Psoas muscle (tissue), 8 donors: ENCODE measurements at regions of chrX and their contacts with region 1.

Region 1: GRCh38 chrX:80876877-80877276 is 67.2 kb upstream of the BRWD3 start:
- DNase-seq: no peak
- ATAC-seq: no peak
- H3K4me3 ChIP-seq: no peak overlapping the region
- H3K27ac ChIP-seq: no peak overlapping the region
- H3K4me1 ChIP-seq: no peaks in the 10 kb centered on the region
- H3K27me3 ChIP-seq: no peaks in the 10 kb centered on the region
- CTCF ChIP-seq: peak; percentile 54

Region 2: GRCh38 chrX:80430826-80431504 is 445.9 kb before region 1 on chrX:
- intact Hi-C with region 1: no loop called
- DNase-seq: no peak
- ATAC-seq: no peak
- H3K4me3 ChIP-seq: no peak overlapping the region
- H3K27ac ChIP-seq: no peak overlapping the region
- H3K4me1 ChIP-seq: no peaks in the 10 kb centered on the region
- H3K27me3 ChIP-seq: peaks cover 0 to 10% (median 0%) of the 10 kb centered on the region in 3 donors
- CTCF ChIP-seq: no peak

Region 3: DNA sequence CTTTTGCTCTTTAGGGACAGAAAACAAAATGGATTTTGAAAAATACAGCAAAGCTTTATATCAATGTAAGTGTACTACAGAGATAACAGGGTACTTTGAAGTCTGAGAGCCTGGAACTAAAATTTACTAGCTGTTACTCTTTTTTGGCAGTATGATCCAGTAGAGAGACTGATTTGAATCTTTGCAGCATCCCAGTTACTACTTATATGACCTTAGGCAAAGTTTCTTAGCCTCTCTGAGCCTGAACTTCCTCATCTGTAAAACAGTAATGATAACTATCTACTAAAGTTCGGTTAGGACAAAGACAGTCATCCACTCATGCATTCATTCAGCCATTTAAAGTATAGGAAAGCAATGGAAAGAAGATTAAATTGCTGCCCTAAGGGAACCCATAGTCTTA is 77.3 kb before region 1 on chrX:
- intact Hi-C with region 1: no loop called
- DNase-seq: no peak
- ATAC-seq: no peak
- H3K4me3 ChIP-seq: no peak overlapping the region
- H3K27ac ChIP-seq: no peak overlapping the region
- H3K4me1 ChIP-seq: no peaks in the 10 kb centered on the region
- H3K27me3 ChIP-seq: no peaks in the 10 kb centered on the region
- CTCF ChIP-seq: no peak

Region 4: DNA sequence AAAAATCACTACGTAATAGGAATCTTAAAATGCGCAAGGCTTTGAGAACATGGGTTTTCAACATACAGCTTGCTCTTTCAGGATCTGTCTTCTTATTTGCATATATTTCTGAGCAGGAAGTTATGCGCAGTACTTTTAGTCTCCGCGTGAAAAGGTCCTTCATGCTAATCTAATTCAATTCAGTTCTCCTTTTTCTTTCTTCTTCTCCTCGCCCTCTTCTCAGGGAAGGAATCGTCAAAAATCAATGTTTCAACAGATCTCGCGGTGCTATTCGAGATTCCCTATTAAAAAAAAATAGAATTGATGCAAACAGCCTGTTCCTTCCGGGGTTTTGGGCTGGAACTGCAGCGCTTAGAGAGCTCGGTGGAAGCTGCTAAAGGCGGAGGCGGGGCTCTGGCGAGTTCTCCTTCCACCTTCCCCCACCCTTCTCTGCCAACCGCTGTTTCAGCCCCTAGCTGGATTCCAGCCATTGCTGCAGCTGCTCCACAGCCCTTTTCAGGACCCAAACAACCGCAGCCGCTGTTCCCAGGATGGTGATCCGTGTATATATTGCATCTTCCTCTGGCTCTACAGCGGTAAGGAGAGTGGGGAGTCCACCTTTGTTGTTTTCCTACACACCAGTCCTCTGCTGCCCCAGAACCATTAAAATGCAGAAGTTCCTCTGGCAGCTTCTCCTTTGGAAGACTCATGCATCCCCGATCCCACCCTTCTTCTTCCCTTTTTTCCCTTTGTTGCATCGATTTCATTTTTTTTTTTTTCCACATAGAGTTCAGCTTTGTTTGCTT is 325.0 kb after region 1 on chrX and contains the starts of genes HMGN5 and SH3BGRL:
- intact Hi-C with region 1: loop called in 1 of 2 experiments (anchors 10 kb)
- DNase-seq: peak; percentile 76 to 86
- ATAC-seq: peak; percentile 46 to 89 (median 80)
- H3K4me3 ChIP-seq: peak within 1 kb of the TSS; percentile 65
- H3K27ac ChIP-seq: peak within 1 kb of the TSS; percentile 33
- H3K4me1 ChIP-seq: no peaks in the 10 kb centered on the region
- H3K27me3 ChIP-seq: no peaks in the 10 kb centered on the region
- CTCF ChIP-seq: no peak
- total RNA-seq, gene HMGN5: 0.78 to 1.8 (median 1.7) TPM
- total RNA-seq, gene SH3BGRL: 10.0 to 17.1 (median 11.7) TPM

Region 5: GRCh38 chrX:81564851-81565250 is 688.0 kb after region 1 on chrX:
- intact Hi-C with region 1: no loop called
- DNase-seq: no peak
- ATAC-seq: no peak
- H3K4me3 ChIP-seq: no peak overlapping the region
- H3K27ac ChIP-seq: no peak overlapping the region
- H3K4me1 ChIP-seq: no peaks in the 10 kb centered on the region
- H3K27me3 ChIP-seq: peaks cover 0 to 4% (median 0%) of the 10 kb centered on the region in 3 donors
- CTCF ChIP-seq: no peak